Common myeloid progenitor, CD34-positive (primary cell): ENCODE measurements at regions of chr16 and their contacts with region 1.

Region 1: GRCh38 chr16:77675464-77676324 is 46.6 kb upstream of the NUDT7 start:
- DNase-seq: peak; percentile 73 to 86 (median 82)
- H3K4me3 ChIP-seq: no peak overlapping the region
- H3K27ac ChIP-seq: no peak overlapping the region
- H3K4me1 ChIP-seq: peaks cover 0 to 32% (median 6%) of the 10 kb centered on the region in 4 experiments
- H3K27me3 ChIP-seq: peaks cover 0 to 4% (median 0%) of the 10 kb centered on the region in 5 experiments

Region 2: DNA sequence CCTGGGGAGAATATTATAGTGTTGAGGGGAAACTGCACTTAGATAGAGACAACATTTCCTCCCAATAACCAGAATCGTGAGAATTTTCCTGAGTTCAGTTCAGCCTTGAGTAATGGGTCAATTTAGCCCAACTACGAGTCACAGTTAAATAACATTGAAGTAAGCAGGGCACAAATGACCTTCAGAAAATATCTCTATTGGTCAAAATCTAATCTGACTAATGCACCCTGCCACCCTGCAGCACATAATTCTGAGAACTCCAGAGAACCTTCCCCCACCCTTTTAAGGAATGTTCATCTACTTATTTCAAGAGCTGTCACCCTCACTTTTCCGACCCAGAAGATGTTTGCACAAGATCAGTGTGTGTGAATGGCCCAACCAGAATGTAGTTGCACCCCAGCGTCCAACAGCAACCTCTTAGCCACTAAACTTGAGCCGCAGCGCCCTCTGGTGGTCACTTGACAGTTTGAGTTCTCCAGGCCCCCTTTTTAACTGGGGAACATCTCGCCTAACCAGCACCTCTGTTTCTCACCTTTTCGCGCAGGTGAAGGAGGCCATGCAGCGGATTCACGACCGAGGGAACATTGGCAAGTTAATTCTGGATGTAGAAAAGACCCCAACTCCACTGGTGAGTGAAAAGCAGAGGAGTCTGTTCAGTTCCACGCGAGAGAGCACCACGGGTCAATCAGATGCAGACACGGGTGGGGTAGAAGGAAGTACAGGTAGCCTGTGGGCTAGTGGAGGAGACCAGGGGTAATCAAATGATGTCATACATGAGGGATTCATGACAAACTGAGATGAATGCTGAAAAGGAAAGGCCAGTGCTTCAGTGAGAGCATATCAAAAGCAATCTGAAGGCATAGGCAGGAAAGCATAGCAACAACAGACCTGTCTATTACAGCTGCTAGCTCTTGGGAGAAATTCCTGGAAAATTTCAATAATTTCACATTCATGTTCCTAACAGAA is 295.9 kb after region 1 on chr16:
- CTCF ChIA-PET with region 1: interaction called, 95 read pairs
- POLR2A ChIA-PET with region 1: no interaction called
- DNase-seq: peak; percentile 69 to 81 (median 72)
- H3K4me3 ChIP-seq: no peak overlapping the region
- H3K27ac ChIP-seq: no peak overlapping the region
- H3K4me1 ChIP-seq: peaks cover 0 to 4% (median 0%) of the 10 kb centered on the region in 4 experiments
- H3K27me3 ChIP-seq: peaks cover 0 to 17% (median 8%) of the 10 kb centered on the region in 5 experiments

Region 3: DNA sequence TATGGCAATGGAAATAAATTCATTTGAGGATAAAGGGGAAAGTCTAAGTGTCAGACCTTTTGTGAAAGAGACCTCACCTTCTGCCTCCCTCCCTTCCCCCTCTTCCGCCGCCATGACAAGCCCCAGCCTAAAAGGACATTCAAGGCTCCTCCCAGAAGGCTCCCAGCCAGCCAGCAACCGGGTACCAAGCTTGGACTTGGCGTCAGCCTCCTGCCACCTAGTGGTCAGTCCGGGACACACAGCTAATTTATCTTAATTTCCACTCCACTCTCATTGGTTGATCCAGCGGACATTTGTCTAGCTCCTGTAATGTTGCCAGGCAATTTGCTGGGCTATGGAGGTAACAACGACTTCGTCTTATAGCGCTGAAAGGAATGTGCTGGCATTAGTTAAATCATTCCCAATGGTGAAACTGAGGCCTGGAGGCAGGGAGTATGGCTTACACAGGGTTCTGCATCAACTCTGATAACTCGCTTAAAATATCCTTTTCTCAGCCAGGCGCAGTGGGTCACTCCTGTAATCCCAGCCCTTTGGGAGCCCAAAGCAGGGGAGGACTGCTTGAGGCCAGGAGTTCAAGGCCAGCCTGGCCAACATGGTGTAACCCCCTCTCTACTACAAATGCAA is 327.3 kb after region 1 on chr16:
- CTCF ChIA-PET with region 1: interaction called, 14 read pairs
- POLR2A ChIA-PET with region 1: no interaction called
- DNase-seq: peak; percentile 84 to 88 (median 86)
- H3K4me3 ChIP-seq: no peak overlapping the region
- H3K27ac ChIP-seq: no peak overlapping the region
- H3K4me1 ChIP-seq: no peaks in the 10 kb centered on the region
- H3K27me3 ChIP-seq: no peaks in the 10 kb centered on the region